Stomach (tissue), 19 donors: ENCODE measurements at regions of chr15 and their contacts with region 1.

Region 1: DNA sequence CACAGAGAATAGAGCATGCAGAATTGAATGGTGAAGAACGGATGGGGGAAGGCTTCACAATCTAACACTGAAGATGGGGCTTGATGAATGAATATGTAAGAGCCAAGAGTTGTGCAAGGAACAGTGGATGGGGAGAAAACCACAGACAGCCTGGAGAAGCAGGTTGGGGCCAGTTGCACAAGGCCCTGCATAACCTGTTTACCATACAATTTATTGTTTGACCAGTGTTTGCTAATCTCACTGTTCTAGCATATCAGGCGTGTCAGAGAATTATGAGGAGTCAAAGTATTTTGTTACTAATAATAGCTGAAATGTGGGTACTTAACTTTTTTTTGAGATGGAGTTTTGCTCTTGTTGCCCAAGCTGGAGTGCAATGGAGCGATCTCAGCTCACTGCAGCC is 36.4 kb downstream of the LINS1 start:
- DNase-seq: no peak
- H3K4me3 ChIP-seq: no peak overlapping the region
- H3K27ac ChIP-seq: no peak overlapping the region
- H3K4me1 ChIP-seq: no peaks in the 10 kb centered on the region
- H3K27me3 ChIP-seq: no peaks in the 10 kb centered on the region
- CTCF ChIP-seq: no peak
- EP300 ChIP-seq: no peak
- POLR2A ChIP-seq: no peak

Region 2: GRCh38 chr15:100349696-100350433 is 215.7 kb before region 1 on chr15:
- intact Hi-C with region 1: loop called (anchors 10 kb)
- DNase-seq: peak; percentile 95 to 98
- H3K4me3 ChIP-seq: peak overlapping the region; percentile 62 to 72 (median 70)
- H3K27ac ChIP-seq: peak overlapping the region; percentile 93 to 98 (median 98)
- H3K4me1 ChIP-seq: peaks cover 5 to 22% (median 13%) of the 10 kb centered on the region in 4 donors
- H3K27me3 ChIP-seq: no peaks in the 10 kb centered on the region
- CTCF ChIP-seq: peak in 5 of 7 experiments; percentile 78 to 90 (median 83)
- EP300 ChIP-seq: no peak
- POLR2A ChIP-seq: peak in 1 of 4 donors; percentile 11